Panc1 (cell line): ENCODE measurements at regions of chr17 and their contacts with region 1.

Region 1: GRCh38 chr17:12522743-12523183 is 142.9 kb upstream of the MYOCD start:
- DNase-seq: no peak
- ATAC-seq: no peak
- H3K4me3 ChIP-seq: no peak overlapping the region
- H3K27ac ChIP-seq: no peak overlapping the region
- H3K4me1 ChIP-seq: no peaks in the 10 kb centered on the region
- H3K27me3 ChIP-seq: no peaks in the 10 kb centered on the region
- CTCF ChIP-seq: no peak

Region 2: GRCh38 chr17:10956821-10957220 is 1565.9 kb before region 1 on chr17:
- CTCF ChIA-PET with region 1: no interaction called
- POLR2A ChIA-PET with region 1: no interaction called
- in situ Hi-C with region 1: no loop called
- intact Hi-C with region 1: no loop called
- DNase-seq: no peak
- ATAC-seq: no peak
- H3K4me3 ChIP-seq: no peak overlapping the region
- H3K27ac ChIP-seq: no peak overlapping the region
- H3K4me1 ChIP-seq: no peaks in the 10 kb centered on the region
- H3K27me3 ChIP-seq: no peaks in the 10 kb centered on the region
- CTCF ChIP-seq: no peak

Region 3: DNA sequence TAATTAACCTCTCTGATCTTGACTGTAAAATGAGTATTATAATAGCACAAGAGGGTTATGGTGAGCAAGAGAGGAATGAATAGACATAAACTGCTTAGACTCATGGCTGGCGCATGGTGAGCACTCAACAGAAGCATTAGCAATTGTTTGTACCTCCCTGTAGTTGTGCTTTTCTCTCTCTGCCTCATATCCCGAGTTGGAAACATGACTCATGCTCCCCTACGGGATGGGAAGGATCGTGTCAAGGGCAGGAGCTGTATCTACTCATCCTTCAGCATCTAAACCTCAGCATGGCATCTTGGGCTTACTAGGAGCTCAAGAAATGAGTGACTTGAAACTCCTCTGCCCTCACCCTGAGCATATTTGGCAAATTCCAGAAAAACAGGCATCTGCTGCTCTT is 202.5 kb before region 1 on chr17:
- CTCF ChIA-PET with region 1: no interaction called
- POLR2A ChIA-PET with region 1: interaction called, 10 read pairs
- in situ Hi-C with region 1: no loop called
- intact Hi-C with region 1: no loop called
- DNase-seq: no peak
- ATAC-seq: no peak
- H3K4me3 ChIP-seq: no peak overlapping the region
- H3K27ac ChIP-seq: no peak overlapping the region
- H3K4me1 ChIP-seq: no peaks in the 10 kb centered on the region
- H3K27me3 ChIP-seq: no peaks in the 10 kb centered on the region
- CTCF ChIP-seq: no peak

Region 4: DNA sequence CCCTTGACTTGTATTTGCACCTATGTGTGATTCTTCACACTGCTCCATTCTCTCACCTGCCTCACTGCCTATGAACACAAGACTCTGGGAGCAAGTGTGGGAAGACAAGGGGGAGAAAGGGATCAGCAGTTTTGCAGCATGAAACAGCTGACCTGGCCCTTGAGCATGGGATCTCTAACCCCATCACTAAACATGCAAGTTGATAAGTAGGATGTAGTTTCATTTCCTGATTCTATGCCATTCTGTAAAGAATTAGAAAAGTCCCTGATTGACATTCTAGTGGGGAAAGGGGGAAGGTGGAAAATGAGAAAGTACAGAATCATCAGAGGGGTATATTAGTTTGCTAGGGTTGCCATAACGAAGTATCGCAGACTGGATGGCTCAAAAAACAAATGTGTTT is 117.6 kb after region 1 on chr17:
- CTCF ChIA-PET with region 1: no interaction called
- POLR2A ChIA-PET with region 1: no interaction called
- in situ Hi-C with region 1: no loop called
- intact Hi-C with region 1: no loop called
- DNase-seq: no peak
- ATAC-seq: no peak
- H3K4me3 ChIP-seq: no peak overlapping the region
- H3K27ac ChIP-seq: no peak overlapping the region
- H3K4me1 ChIP-seq: no peaks in the 10 kb centered on the region
- H3K27me3 ChIP-seq: no peaks in the 10 kb centered on the region
- CTCF ChIP-seq: no peak

Region 5: GRCh38 chr17:12656354-12656753 is 133.6 kb after region 1 on chr17:
- CTCF ChIA-PET with region 1: no interaction called
- POLR2A ChIA-PET with region 1: no interaction called
- in situ Hi-C with region 1: no loop called
- intact Hi-C with region 1: no loop called
- DNase-seq: no peak
- ATAC-seq: no peak
- H3K4me3 ChIP-seq: no peak overlapping the region
- H3K27ac ChIP-seq: no peak overlapping the region
- H3K4me1 ChIP-seq: no peaks in the 10 kb centered on the region
- H3K27me3 ChIP-seq: no peaks in the 10 kb centered on the region
- CTCF ChIP-seq: no peak